Spleen (tissue), 13 donors: ENCODE measurements at regions of chr2 and their contacts with region 1.

Region 1: GRCh38 chr2:166361351-166362153 is 14.2 kb downstream of the SCN9A start:
- DNase-seq: no peak
- H3K4me3 ChIP-seq: no peak overlapping the region
- H3K27ac ChIP-seq: no peak overlapping the region
- H3K4me1 ChIP-seq: peaks cover 0 to 5% (median 0%) of the 10 kb centered on the region in 6 donors
- H3K27me3 ChIP-seq: no peaks in the 10 kb centered on the region
- CTCF ChIP-seq: peak in 8 of 11 experiments; percentile 17 to 41 (median 34)
- POLR2A ChIP-seq: no peak

Region 2: DNA sequence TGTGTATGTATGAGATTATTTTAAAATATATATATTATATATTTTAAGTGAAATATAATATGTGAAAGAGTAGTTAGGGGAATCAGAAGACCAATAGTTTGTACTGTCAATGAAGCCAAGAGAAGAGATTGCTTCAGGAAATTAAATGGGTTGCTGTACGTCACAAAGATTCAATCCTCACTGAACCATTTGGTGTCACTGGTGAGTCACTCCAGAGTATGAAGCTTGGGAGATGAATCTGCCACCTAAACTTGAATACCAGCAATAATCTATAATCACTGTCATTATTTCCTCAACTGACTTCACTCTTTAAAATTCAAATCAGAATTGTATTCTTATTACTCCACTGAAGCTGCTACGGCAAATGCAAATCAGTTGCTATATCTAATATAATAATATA is 56.1 kb after region 1 on chr2:
- intact Hi-C with region 1: loop called (anchors 5 kb)
- DNase-seq: no peak
- H3K4me3 ChIP-seq: no peak overlapping the region
- H3K27ac ChIP-seq: no peak overlapping the region
- H3K4me1 ChIP-seq: no peaks in the 10 kb centered on the region
- H3K27me3 ChIP-seq: no peaks in the 10 kb centered on the region
- CTCF ChIP-seq: no peak
- POLR2A ChIP-seq: no peak